Caco-2 (cell line): ENCODE measurements at regions of chr17 and their contacts with region 1.

Region 1: DNA sequence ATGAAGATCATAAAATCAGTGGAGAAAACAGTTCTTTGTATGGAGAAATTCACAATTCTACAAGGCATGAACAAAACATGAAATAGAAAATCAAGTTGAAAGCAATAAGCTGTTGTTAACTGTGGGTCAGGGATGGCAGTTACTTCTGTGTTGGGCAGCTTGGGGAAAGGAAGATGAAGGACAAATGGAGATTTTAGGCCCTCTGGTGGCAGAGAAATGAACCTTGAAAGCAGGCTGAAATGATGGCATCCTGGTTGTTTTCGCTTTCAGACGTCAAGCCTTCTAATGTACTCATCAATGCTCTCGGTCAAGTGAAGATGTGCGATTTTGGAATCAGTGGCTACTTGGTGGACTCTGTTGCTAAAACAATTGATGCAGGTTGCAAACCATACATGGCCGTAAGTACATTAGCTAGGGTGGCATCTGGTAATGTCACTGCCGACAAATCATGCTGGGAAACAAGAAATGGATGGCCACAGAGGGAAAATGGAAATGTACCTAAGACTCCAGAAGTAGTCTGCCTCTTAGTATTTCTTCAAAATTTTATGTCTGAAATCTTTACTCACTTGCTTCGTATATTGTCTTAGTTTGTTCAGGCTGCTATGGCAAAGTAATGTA is 108.9 kb downstream of the MAP2K6 start:
- DNase-seq: peak in 1 of 2 experiments; percentile 45
- H3K4me3 ChIP-seq: no peak overlapping the region
- H3K4me3 Mint-ChIP-seq: no peak overlapping the region
- H3K27ac Mint-ChIP-seq: no peak overlapping the region
- H3K4me1 ChIP-seq: no peaks in the 10 kb centered on the region
- H3K4me1 Mint-ChIP-seq: no peaks in the 10 kb centered on the region
- H3K27me3 ChIP-seq: no peaks in the 10 kb centered on the region
- H3K27me3 Mint-ChIP-seq: no peaks in the 10 kb centered on the region
- CTCF ChIP-seq: peak; percentile 72 to 73

Region 2: GRCh38 chr17:69117855-69118784 is 405.2 kb before region 1 on chr17:
- CTCF ChIA-PET with region 1: no interaction called
- POLR2A ChIA-PET with region 1: no interaction called
- intact Hi-C with region 1: no loop called
- DNase-seq: no peak
- H3K4me3 ChIP-seq: no peak overlapping the region
- H3K4me3 Mint-ChIP-seq: no peak overlapping the region
- H3K27ac Mint-ChIP-seq: no peak overlapping the region
- H3K4me1 ChIP-seq: no peaks in the 10 kb centered on the region
- H3K4me1 Mint-ChIP-seq: no peaks in the 10 kb centered on the region
- H3K27me3 ChIP-seq: no peaks in the 10 kb centered on the region
- H3K27me3 Mint-ChIP-seq: peaks cover 3% of the 10 kb centered on the region
- CTCF ChIP-seq: no peak

Region 3: GRCh38 chr17:69246726-69247375 is 276.5 kb before region 1 on chr17:
- CTCF ChIA-PET with region 1: no interaction called
- POLR2A ChIA-PET with region 1: no interaction called
- intact Hi-C with region 1: loop called (anchors 10 kb)
- DNase-seq: peak in 1 of 2 experiments; percentile 36
- H3K4me3 ChIP-seq: no peak overlapping the region
- H3K4me3 Mint-ChIP-seq: no peak overlapping the region
- H3K27ac Mint-ChIP-seq: no peak overlapping the region
- H3K4me1 ChIP-seq: no peaks in the 10 kb centered on the region
- H3K4me1 Mint-ChIP-seq: peaks cover 7% of the 10 kb centered on the region
- H3K27me3 ChIP-seq: no peaks in the 10 kb centered on the region
- H3K27me3 Mint-ChIP-seq: no peaks in the 10 kb centered on the region
- CTCF ChIP-seq: peak; percentile 40 to 56

Region 4: DNA sequence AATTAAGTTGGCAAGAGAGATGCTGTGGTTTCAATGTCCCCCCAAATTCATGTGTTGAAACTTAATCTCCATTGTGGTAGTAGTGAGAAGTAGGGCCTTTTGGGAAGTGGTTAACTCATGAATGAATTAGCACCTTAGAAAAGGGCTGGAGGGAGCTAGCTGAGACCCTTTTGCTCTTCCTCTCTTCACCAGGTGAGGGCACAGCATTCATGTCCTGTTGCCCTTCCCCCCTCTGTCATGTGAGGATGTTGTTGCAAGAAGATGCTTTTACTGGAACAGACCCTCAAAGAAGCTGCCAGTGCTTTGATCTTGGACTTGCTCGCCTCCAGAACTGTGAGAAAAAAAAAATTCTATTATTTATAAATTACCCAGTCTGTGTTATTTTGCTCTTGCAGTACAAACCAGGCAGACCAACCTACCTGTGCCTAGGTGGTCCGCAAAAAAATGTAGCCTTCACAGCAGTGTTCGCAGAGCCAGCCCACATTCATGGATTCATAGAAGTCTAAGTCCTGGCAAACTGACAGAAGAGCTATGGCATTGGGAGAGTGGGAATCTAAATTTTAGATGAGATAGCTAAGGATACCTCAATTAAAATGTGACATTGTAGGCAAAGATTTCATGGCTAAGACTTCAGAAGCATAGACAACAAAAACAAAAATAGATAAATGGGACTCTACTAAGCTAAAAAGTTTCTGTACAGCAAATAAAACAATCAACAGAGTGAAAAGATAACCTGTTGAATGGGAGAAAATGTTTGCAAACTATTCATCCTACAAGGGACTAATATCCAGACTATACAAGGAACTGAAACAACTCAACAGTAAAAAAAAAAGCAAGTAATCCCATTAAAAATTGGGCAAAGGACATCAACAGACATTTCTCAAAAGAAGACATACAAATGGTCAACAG is 164.4 kb before region 1 on chr17:
- CTCF ChIA-PET with region 1: interaction called, 6 read pairs
- POLR2A ChIA-PET with region 1: no interaction called
- intact Hi-C with region 1: loop called (anchors 1 kb)
- DNase-seq: peak; percentile 38 to 62
- H3K4me3 ChIP-seq: no peak overlapping the region
- H3K4me3 Mint-ChIP-seq: no peak overlapping the region
- H3K27ac Mint-ChIP-seq: no peak overlapping the region
- H3K4me1 ChIP-seq: no peaks in the 10 kb centered on the region
- H3K4me1 Mint-ChIP-seq: no peaks in the 10 kb centered on the region
- H3K27me3 ChIP-seq: no peaks in the 10 kb centered on the region
- H3K27me3 Mint-ChIP-seq: no peaks in the 10 kb centered on the region
- CTCF ChIP-seq: peak; percentile 56 to 82

Region 5: GRCh38 chr17:69434164-69434579 is 89.2 kb before region 1 on chr17:
- CTCF ChIA-PET with region 1: no interaction called
- POLR2A ChIA-PET with region 1: no interaction called
- intact Hi-C with region 1: loop called (anchors 1 kb)
- DNase-seq: no peak
- H3K4me3 ChIP-seq: no peak overlapping the region
- H3K4me3 Mint-ChIP-seq: no peak overlapping the region
- H3K27ac Mint-ChIP-seq: no peak overlapping the region
- H3K4me1 ChIP-seq: no peaks in the 10 kb centered on the region
- H3K4me1 Mint-ChIP-seq: peaks cover 10% of the 10 kb centered on the region
- H3K27me3 ChIP-seq: no peaks in the 10 kb centered on the region
- H3K27me3 Mint-ChIP-seq: no peaks in the 10 kb centered on the region
- CTCF ChIP-seq: no peak

Region 6: DNA sequence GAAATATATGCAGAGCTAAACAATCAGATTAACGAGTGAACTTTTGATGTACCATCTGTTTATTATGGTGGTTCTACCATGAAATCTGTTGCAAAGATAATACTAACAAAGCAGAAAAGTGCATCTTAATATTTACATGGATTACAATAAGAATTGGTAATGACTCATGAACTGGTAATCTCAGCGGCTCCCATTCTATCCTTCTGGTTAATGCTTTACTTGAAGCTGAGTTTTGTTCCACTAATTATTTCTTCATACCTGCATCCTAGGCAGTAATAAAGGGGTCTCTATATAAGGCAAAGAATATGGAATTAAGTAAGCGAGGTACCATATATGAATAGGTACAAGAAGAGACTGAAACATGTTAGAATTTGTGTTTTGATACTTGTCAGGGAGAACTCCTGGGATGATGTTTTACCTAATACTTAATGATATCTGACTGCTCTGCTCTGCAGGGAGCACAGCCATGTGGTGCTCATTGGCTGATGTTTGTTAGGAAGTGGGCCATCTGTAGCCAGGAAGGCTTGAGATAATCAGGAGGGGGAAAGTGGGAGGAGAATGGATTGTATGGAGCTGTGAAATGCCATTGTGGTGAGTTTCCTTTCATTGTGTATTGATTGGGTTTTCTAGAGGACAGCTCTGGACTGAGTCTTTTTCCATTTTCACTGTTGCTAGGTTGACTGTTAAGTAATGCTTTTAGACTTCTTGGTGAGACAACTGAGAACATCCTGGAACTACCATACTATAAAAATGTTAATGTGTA is 56.3 kb before region 1 on chr17:
- CTCF ChIA-PET with region 1: no interaction called
- POLR2A ChIA-PET with region 1: no interaction called
- intact Hi-C with region 1: no loop called
- DNase-seq: no peak
- H3K4me3 ChIP-seq: no peak overlapping the region
- H3K4me3 Mint-ChIP-seq: peak overlapping the region; percentile 3
- H3K27ac Mint-ChIP-seq: peak overlapping the region; percentile 10
- H3K4me1 ChIP-seq: peaks cover 23% of the 10 kb centered on the region
- H3K4me1 Mint-ChIP-seq: peaks cover 34% of the 10 kb centered on the region
- H3K27me3 ChIP-seq: no peaks in the 10 kb centered on the region
- H3K27me3 Mint-ChIP-seq: no peaks in the 10 kb centered on the region
- CTCF ChIP-seq: no peak

Region 7: DNA sequence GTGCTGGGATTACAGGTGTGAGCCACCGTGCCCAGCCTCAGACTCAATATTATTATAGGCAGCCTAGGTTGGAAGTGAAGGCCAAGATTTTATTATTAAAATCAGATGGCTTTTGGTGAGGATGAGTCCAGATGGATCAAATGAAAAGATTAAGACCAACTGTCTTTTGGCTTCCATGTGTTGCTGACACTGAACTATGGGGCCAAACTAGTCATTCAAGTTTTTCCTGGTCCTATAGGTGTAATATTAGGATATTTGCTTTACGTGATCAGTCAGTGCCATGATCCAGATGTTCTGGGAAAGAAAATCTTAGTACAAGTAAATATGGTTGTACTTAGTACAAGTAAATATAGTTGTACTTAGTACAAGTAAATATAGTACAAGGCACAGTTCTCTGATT is 31.7 kb after region 1 on chr17:
- CTCF ChIA-PET with region 1: no interaction called
- POLR2A ChIA-PET with region 1: no interaction called
- intact Hi-C with region 1: no loop called
- DNase-seq: no peak
- H3K4me3 ChIP-seq: no peak overlapping the region
- H3K4me3 Mint-ChIP-seq: no peak overlapping the region
- H3K27ac Mint-ChIP-seq: no peak overlapping the region
- H3K4me1 ChIP-seq: no peaks in the 10 kb centered on the region
- H3K4me1 Mint-ChIP-seq: no peaks in the 10 kb centered on the region
- H3K27me3 ChIP-seq: no peaks in the 10 kb centered on the region
- H3K27me3 Mint-ChIP-seq: no peaks in the 10 kb centered on the region
- CTCF ChIP-seq: no peak

Region 8: DNA sequence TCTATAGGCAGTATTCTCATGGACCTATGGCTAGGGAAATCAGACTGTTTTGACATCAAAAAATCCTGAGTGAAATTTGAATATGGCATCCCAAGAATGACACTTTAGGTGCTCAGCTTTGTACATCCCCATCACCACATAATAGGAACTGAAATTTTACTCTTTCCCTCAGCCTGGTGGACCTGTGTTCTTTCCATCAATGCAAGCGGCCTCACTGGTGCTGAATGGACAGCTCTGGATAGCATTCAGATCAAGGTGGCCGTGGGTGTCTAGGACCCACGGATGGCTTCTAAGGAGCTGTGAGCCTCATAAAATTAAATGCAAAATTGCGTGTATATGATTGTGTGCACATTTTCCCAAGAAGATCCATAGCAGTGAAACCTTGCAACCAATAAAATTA is 43.8 kb after region 1 on chr17:
- CTCF ChIA-PET with region 1: interaction called, 3 read pairs
- POLR2A ChIA-PET with region 1: no interaction called
- intact Hi-C with region 1: loop called (anchors 5 kb)
- DNase-seq: peak in 1 of 2 experiments; percentile 13
- H3K4me3 ChIP-seq: no peak overlapping the region
- H3K4me3 Mint-ChIP-seq: no peak overlapping the region
- H3K27ac Mint-ChIP-seq: no peak overlapping the region
- H3K4me1 ChIP-seq: no peaks in the 10 kb centered on the region
- H3K4me1 Mint-ChIP-seq: no peaks in the 10 kb centered on the region
- H3K27me3 ChIP-seq: no peaks in the 10 kb centered on the region
- H3K27me3 Mint-ChIP-seq: peaks cover 8% of the 10 kb centered on the region
- CTCF ChIP-seq: no peak

Region 9: DNA sequence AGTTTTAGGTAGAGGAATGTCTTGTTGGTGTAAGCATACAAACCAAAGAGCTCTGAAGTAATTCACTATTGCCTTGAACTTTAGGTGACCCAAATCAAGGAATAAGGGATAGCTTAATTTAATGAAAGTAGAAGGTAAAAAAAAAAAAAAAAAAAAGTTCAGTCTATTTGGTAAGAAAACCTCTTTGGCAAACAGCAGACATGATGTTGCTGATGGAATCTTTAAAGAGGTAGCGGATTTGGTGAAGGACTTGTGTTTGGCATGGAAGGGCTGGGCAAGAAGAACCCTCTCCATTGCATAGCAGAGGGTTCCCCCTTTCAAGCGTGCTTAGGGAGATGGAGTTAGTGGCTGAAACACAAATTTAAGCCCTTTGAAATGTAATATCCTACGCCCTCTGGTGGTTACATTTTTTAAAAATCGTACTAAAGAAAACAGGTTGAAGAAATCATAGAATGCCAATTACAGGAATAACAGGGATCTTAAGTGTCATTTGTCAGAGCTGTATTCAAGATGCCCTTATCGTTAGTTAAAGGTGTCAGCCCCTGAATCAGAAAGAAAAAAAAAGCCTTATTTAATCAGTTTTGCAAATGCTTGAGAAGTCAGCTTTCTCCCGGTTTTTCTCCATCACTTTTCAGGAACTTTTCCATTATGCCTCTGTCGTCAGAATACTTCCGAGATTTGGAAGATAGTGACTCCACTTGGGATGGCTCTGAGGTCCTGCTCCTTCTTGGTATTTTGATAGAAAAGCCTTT is 1029.1 kb after region 1 on chr17:
- CTCF ChIA-PET with region 1: no interaction called
- POLR2A ChIA-PET with region 1: no interaction called
- intact Hi-C with region 1: loop called (anchors 5 kb)
- DNase-seq: peak in 1 of 2 experiments; percentile 45
- H3K4me3 ChIP-seq: no peak overlapping the region
- H3K4me3 Mint-ChIP-seq: no peak overlapping the region
- H3K27ac Mint-ChIP-seq: no peak overlapping the region
- H3K4me1 ChIP-seq: no peaks in the 10 kb centered on the region
- H3K4me1 Mint-ChIP-seq: peaks cover 6% of the 10 kb centered on the region
- H3K27me3 ChIP-seq: no peaks in the 10 kb centered on the region
- H3K27me3 Mint-ChIP-seq: no peaks in the 10 kb centered on the region
- CTCF ChIP-seq: peak; percentile 47 to 70